Astrocyte of the cerebellum (primary cell): ENCODE measurements at regions of chr1 and their contacts with region 1.

Region 1: GRCh38 chr1:186099336-186100104 is 275.5 kb downstream of the TPR start:
- DNase-seq: no peak
- H3K4me3 ChIP-seq: no peak overlapping the region
- CTCF ChIP-seq: no peak

Region 2: DNA sequence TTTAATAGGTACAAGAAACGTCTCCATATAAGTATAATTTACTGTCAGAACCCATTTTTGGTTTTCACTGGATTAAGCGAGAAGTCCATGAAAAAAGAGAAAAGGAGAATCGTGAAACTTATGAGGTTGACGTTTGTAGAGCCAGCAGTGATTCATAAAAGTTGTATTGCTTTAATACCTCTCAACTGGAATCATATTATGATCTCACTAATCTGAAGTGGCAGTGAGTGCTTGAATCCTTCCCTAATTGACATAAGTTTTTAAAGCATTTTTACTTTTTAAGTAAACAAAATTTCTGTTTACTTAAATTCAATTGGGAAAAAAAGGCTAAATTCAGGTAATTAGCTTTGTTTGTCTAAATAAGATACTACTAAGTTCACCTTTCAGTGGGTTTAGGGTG is 39.7 kb before region 1 on chr1:
- in situ Hi-C with region 1: loop called (anchors 5 kb)
- DNase-seq: no peak
- H3K4me3 ChIP-seq: no peak overlapping the region
- CTCF ChIP-seq: no peak